MCF 10A (cell line): ENCODE measurements at regions of chr1 and their contacts with region 1.

Region 1: DNA sequence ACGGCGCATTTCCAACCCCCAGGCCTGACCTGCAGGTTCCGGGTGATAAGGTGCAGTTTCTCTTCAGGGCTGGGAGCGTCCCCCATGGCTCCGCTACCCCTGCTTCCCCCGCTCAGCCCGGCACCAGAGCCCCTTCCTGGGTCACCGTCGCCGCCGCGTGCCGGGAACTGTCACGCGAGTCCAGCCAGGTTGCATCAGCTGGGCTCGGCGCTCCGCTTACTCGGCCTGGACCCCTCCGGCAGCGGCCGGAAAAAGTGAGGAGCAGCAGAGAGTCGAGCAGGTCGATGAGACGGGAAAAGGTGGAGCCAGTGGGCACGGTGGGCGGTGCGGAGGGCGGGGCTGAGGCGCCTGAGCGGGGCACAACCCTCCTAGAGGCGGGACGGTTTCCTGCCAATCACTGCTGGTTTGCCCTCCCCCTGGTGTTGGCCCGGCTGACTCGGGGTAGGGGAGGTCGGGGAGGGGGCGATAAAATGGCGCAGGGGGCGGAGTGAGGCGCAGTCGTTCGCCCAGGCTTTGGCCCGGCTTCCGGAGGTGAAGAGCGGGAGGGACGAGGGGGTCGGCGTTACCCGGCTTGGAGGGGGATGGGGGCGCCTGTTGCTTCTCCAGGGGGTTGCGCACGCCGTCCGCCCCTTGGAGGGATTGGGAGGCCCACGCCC is at the starts of genes S100PBP and YARS1:
- DNase-seq: peak; percentile 98
- H3K4me3 Mint-ChIP-seq: peak within 1 kb of the TSS; percentile 87
- H3K27ac Mint-ChIP-seq: peak within 1 kb of the TSS; percentile 87
- H3K4me1 Mint-ChIP-seq: peaks cover 27% of the 10 kb centered on the region
- H3K27me3 Mint-ChIP-seq: no peaks in the 10 kb centered on the region
- CTCF ChIP-seq: no peak
- total RNA-seq, gene S100PBP: 24.4 and 34.1 TPM in 2 replicates
- total RNA-seq, gene YARS1: 347 and 372 TPM in 2 replicates

Region 2: GRCh38 chr1:32741413-32742198 is 75.7 kb before region 1 on chr1:
- CTCF ChIA-PET with region 1: interaction called, 3 read pairs
- POLR2A ChIA-PET with region 1: interaction called, 16 read pairs
- intact Hi-C with region 1: no loop called
- DNase-seq: no peak
- H3K4me3 Mint-ChIP-seq: peak overlapping the region; percentile 75
- H3K27ac Mint-ChIP-seq: peak overlapping the region; percentile 63
- H3K4me1 Mint-ChIP-seq: peaks cover 27% of the 10 kb centered on the region
- H3K27me3 Mint-ChIP-seq: no peaks in the 10 kb centered on the region
- CTCF ChIP-seq: peak; percentile 59

Region 3: GRCh38 chr1:32761253-32761880 is 55.9 kb before region 1 on chr1:
- CTCF ChIA-PET with region 1: interaction called, 3 read pairs
- POLR2A ChIA-PET with region 1: interaction called, 14 read pairs
- intact Hi-C with region 1: no loop called
- DNase-seq: peak; percentile 96
- H3K4me3 Mint-ChIP-seq: peak overlapping the region; percentile 72
- H3K27ac Mint-ChIP-seq: peak overlapping the region; percentile 97
- H3K4me1 Mint-ChIP-seq: peaks cover 51% of the 10 kb centered on the region
- H3K27me3 Mint-ChIP-seq: no peaks in the 10 kb centered on the region
- CTCF ChIP-seq: no peak

Region 4: GRCh38 chr1:32786856-32787255 is 30.4 kb before region 1 on chr1:
- CTCF ChIA-PET with region 1: interaction called, 3 read pairs
- POLR2A ChIA-PET with region 1: interaction called, 18 read pairs
- intact Hi-C with region 1: no loop called
- DNase-seq: no peak
- H3K4me3 Mint-ChIP-seq: no peak overlapping the region
- H3K27ac Mint-ChIP-seq: no peak overlapping the region
- H3K4me1 Mint-ChIP-seq: peaks cover 2% of the 10 kb centered on the region
- H3K27me3 Mint-ChIP-seq: no peaks in the 10 kb centered on the region
- CTCF ChIP-seq: no peak

Region 5: DNA sequence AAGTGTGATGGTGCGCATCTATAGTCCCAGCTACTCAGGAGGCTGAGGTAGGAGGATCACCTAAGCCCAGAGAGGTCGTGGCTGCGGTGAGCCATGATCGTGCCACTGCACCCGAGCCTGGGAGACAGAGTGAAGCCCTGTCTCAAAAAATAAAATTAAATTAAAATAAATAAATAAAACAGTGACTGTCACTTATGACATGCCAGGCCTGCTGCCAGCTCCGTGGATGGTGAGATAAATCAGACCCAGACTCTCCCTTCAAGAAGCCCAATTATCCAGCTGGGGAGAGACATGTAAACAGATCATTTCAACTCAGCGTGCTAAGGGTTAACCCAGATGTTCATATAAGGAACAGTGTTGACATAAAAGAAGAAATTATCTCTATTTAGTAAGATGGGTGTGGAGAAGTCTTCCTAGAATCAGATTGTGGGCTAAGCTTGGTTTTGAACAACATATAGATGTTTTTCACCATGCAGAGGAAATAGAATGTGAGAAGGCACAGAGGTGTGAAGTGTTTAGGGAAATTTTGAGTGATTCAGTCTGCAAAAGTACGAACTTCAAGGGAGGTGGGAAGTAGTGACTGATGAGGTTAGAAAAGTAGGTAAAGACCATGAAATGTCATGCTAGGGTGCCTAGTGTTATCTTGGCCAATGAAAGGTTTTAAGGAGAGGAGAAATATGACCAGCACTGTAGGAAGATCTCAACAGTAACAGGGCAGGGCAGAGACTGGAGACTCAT is 18.4 kb before region 1 on chr1:
- CTCF ChIA-PET with region 1: no interaction called
- POLR2A ChIA-PET with region 1: interaction called, 12 read pairs
- intact Hi-C with region 1: no loop called
- DNase-seq: no peak
- H3K4me3 Mint-ChIP-seq: no peak overlapping the region
- H3K27ac Mint-ChIP-seq: peak overlapping the region; percentile 93
- H3K4me1 Mint-ChIP-seq: peaks cover 33% of the 10 kb centered on the region
- H3K27me3 Mint-ChIP-seq: no peaks in the 10 kb centered on the region
- CTCF ChIP-seq: no peak